ENCODE measurements at regions of chr1 and their contacts with region 1.

Region 1: DNA sequence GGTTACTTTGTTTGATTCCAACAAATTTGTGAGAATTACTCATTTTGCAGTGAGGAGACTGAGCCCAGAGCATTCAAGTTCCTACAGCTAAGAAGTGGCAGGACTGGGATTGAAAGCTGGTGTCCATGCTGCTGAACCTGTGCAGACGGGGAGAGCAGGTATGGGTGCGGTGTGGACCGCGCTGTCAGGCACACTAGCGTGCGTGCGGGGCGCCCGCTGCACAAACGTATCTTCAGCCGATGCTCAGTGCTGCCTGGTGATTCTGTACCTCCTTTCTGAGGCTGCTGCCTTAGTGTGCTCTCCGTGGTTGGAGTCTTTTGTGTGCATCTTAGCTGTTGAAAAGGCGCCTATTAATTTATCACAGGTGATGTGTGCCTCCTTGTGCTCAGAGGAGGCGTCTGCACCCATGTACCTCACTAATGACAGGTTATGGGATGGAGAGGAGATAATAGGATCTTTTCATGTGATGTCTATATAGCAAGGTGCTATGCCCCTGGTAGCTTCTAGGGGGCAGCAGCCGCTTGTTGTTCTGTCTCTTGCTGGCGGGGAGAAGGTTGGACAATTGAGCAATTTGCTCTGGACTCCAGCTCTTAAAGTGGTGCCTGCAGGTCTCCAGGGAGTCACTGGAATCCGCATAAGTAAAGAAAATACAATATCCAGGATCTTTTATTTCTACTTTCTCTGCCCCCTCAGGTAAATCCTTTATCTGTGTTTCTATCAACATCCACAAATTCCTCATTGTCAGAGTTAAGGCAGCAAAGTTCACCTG is 32.5 kb downstream of the PEX14 start:
- DNase-seq: peak; percentile 49 to 71 (median 66)
- ATAC-seq: peak; percentile 71 to 90 (median 85)
- H3K4me3 ChIP-seq: no peak overlapping the region
- H3K27ac ChIP-seq: no peak overlapping the region
- H3K4me1 ChIP-seq: peaks cover 0 to 37% (median 26%) of the 10 kb centered on the region in 12 donors
- H3K27me3 ChIP-seq: no peaks in the 10 kb centered on the region
- CTCF ChIP-seq: peak; percentile 73 to 90 (median 80)
- POLR2A ChIP-seq: no peak

Region 2: DNA sequence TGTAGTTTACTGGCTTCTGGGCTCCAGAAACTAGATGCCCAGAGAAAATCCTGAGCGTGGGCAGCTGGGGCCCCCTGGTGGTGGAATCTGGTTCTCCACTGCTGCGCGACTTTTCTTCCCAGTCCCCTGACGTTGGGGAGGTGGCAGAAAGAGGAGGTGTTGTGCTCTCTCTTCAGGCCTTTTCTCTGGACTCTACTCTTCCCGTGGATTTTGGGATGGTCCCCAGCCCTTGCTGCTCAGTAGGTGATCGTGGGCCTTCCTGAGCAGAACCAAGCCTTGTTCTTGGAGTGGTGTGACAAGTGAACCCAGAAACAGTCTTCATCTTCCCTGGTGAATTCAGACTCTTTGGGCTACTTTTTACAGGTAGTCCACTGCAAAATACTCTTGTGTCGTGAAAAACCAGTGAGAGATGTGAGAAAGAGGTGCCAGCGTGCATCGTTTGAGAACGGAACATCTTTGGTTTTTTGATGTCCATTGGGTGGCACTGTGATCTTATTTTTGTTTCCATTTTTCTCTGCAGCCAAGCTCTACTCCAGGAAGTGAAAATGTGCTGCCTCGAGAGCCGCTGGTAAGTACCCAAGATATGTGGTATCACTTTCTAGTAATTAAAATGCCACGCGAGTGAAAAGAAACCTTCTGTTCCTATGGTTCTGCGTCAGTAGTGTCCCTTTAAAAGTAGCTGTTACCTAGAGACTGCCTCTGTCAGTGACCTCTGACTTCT is 12.4 kb before region 1 on chr1:
- intact Hi-C with region 1: loop called in 1 of 10 experiments (anchors 1 kb)
- DNase-seq: peak; percentile 46 to 82 (median 63)
- ATAC-seq: peak; percentile 87 to 89 (median 88)
- H3K4me3 ChIP-seq: peak overlapping the region in 9 of 12 donors; percentile 11 to 50 (median 30)
- H3K27ac ChIP-seq: peak overlapping the region in 10 of 12 donors; percentile 33 to 81 (median 58)
- H3K4me1 ChIP-seq: peaks cover 0 to 28% (median 18%) of the 10 kb centered on the region in 12 donors
- H3K27me3 ChIP-seq: no peaks in the 10 kb centered on the region
- CTCF ChIP-seq: peak; percentile 76 to 91 (median 87)
- POLR2A ChIP-seq: no peak

Region 3: GRCh38 chr1:10519016-10519417 is 11.7 kb after region 1 on chr1:
- intact Hi-C with region 1: no loop called
- DNase-seq: no peak
- ATAC-seq: peak; percentile 41 to 83 (median 68)
- H3K4me3 ChIP-seq: no peak overlapping the region
- H3K27ac ChIP-seq: no peak overlapping the region
- H3K4me1 ChIP-seq: peaks cover 0 to 43% (median 18%) of the 10 kb centered on the region in 12 donors
- H3K27me3 ChIP-seq: no peaks in the 10 kb centered on the region
- CTCF ChIP-seq: no peak
- POLR2A ChIP-seq: no peak

Region 4: DNA sequence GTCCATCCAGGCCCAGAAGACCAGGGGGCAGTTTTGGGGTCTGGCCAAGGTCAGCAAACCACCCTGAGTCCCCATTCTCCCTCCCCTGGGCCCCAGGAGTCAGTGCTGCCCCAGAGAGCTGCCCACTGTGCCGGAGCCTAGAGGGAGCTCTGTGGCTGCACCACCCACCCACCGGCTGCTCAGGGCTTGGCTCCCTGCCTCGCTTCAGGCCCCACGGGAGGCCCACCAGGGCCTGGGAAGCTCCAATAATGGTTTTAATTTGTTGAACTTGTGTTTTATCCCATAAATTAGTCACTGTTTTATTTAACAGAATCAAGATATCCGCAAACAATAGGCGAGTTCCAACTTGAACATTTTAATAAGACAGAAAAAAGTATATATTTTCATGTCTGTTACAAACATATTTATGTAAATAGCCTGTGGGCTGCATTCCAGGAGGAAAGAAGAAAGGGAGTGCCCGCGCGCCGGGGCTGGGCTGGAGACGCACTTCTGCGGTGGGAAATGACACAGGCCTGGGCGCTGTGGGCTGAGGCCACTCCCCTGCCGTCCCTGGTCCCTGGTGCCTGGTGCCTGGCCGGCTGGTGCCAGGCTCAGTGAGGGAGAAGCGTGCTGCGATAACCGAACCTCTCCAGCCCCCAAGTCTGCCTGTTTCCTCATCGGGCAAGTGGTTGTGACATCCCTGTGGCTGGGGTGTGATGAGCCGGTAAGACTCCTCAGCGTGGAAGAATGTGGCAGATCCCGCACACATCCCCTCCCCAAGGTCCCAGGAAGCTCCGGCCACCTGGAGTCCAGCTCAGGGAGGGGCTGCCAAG is 128.0 kb after region 1 on chr1:
- intact Hi-C with region 1: loop called in 1 of 10 experiments (anchors 10 kb)
- DNase-seq: peak in 2 of 5 donors; percentile 44 to 73
- ATAC-seq: peak in 3 of 4 donors; percentile 25 to 50 (median 40)
- H3K4me3 ChIP-seq: no peak overlapping the region
- H3K27ac ChIP-seq: peak overlapping the region; percentile 15 to 77 (median 56)
- H3K4me1 ChIP-seq: peaks cover 0 to 35% (median 18%) of the 10 kb centered on the region in 12 donors
- H3K27me3 ChIP-seq: peaks cover 0 to 7% (median 0%) of the 10 kb centered on the region in 9 donors
- CTCF ChIP-seq: peak in 1 of 12 donors; percentile 16
- POLR2A ChIP-seq: no peak

Region 5: GRCh38 chr1:10679496-10680220 is 172.4 kb after region 1 on chr1:
- intact Hi-C with region 1: loop called in 1 of 10 experiments (anchors 10 kb)
- DNase-seq: peak in 4 of 5 donors; percentile 47 to 59 (median 56)
- ATAC-seq: peak in 1 of 4 donors; percentile 17
- H3K4me3 ChIP-seq: peak overlapping the region in 1 of 12 donors; percentile 2
- H3K27ac ChIP-seq: peak overlapping the region in 8 of 12 donors; percentile 38 to 94 (median 52)
- H3K4me1 ChIP-seq: peaks cover 15 to 100% (median 87%) of the 10 kb centered on the region in 12 donors
- H3K27me3 ChIP-seq: no peaks in the 10 kb centered on the region
- CTCF ChIP-seq: no peak
- POLR2A ChIP-seq: no peak

Region 6: GRCh38 chr1:10941891-10942541 is 434.7 kb after region 1 on chr1:
- intact Hi-C with region 1: loop called in 6 of 10 experiments (anchors 5 to 10 kb)
- DNase-seq: peak in 2 of 5 donors; percentile 58 to 77
- ATAC-seq: peak in 2 of 4 donors; percentile 12 to 43
- H3K4me3 ChIP-seq: no peak overlapping the region
- H3K27ac ChIP-seq: no peak overlapping the region
- H3K4me1 ChIP-seq: peaks cover 0 to 22% (median 12%) of the 10 kb centered on the region in 12 donors
- H3K27me3 ChIP-seq: peaks cover 0 to 6% (median 0%) of the 10 kb centered on the region in 9 donors
- CTCF ChIP-seq: peak; percentile 80 to 94 (median 84)
- POLR2A ChIP-seq: no peak

Measured in heart left ventricle (tissue), 16 donors.